Activated B cell treated with CpG ODN at 0.5 μM for 24 hours (primary cell): ENCODE measurements at regions of chr2 and their contacts with region 1.

Region 1: DNA sequence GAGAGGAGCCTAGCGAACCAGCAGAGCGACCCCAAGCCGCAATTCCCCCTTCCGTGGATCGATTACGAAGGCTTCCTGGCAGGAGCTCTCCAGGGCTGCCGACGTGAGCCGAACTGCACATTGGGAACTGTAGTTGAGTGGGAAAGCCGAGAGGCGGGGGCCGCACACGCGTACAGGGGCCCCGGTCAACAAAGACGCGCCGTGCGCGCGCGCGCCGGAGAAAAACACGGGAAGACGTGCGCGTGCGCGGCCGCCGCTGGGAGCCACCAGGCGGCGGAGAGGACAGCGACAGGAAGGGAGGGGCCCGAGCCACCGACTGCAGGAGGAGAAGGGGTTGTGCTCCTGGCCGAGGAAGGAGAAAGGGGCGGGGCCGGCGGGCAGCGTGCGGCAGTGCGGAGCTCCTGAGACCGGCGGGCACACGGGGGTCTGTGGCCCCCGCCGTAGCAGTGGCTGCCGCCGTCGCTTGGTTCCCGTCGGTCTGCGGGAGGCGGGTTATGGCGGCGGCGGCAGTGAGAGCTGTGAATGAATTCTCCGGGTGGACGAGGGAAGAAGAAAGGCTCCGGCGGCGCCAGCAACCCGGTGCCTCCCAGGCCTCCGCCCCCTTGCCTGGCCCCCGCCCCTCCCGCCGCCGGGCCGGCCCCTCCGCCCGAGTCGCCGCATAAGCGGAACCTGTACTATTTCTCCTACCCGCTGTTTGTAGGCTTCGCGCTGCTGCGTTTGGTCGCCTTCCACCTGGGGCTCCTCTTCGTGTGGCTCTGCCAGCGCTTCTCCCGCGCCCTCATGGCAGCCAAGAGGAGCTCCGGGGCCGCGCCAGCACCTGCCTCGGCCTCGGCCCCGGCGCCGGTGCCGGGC is at the start of gene SPAST:
- DNase-seq: peak; percentile 96
- ATAC-seq: peak; percentile 93
- H3K4me3 Mint-ChIP-seq: peak within 1 kb of the TSS; percentile 97
- H3K27ac Mint-ChIP-seq: peak within 1 kb of the TSS; percentile 93
- H3K4me1 Mint-ChIP-seq: peaks cover 30% of the 10 kb centered on the region
- H3K27me3 Mint-ChIP-seq: no peaks in the 10 kb centered on the region
- CTCF ChIP-seq: no peak
- total RNA-seq, gene SPAST: 17.6 and 20.8 TPM in 2 replicates

Region 2: GRCh38 chr2:32010670-32011484 is 52.7 kb before region 1 on chr2 and contains the start of gene MEMO1:
- CTCF ChIA-PET with region 1: no interaction called
- POLR2A ChIA-PET with region 1: interaction called, 36 read pairs
- intact Hi-C with region 1: loop called (anchors 1 kb)
- DNase-seq: peak; percentile 93
- ATAC-seq: peak; percentile 81
- H3K4me3 Mint-ChIP-seq: peak within 1 kb of the TSS; percentile 91
- H3K27ac Mint-ChIP-seq: peak within 1 kb of the TSS; percentile 96
- H3K4me1 Mint-ChIP-seq: peaks cover 39% of the 10 kb centered on the region
- H3K27me3 Mint-ChIP-seq: no peaks in the 10 kb centered on the region
- CTCF ChIP-seq: no peak
- total RNA-seq, gene MEMO1: 68.7 and 71.6 TPM in 2 replicates

Region 3: DNA sequence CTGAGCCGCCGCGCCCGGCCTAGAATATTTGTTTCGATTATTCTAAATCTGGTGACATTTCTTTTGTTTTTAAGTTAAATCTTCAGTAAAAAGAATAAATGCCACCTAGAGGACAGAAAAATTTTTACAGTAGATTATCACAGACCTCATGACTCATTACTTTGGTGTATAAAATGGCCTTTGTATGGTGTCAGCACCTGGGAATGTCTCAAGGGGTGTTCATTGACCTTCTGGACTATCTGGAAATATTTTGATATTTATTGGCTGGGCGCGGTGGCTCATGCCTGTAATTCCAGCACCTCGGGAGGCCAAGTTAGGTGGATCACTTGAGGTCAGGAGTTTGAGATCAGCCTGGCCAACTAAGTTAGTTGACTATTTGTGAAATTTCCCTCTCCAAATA is 71.9 kb after region 1 on chr2:
- CTCF ChIA-PET with region 1: interaction called, 3 read pairs
- POLR2A ChIA-PET with region 1: no interaction called
- intact Hi-C with region 1: loop called (anchors 10 kb)
- DNase-seq: no peak
- ATAC-seq: peak; percentile 31
- H3K4me3 Mint-ChIP-seq: no peak overlapping the region
- H3K27ac Mint-ChIP-seq: no peak overlapping the region
- H3K4me1 Mint-ChIP-seq: peaks cover 2% of the 10 kb centered on the region
- H3K27me3 Mint-ChIP-seq: no peaks in the 10 kb centered on the region
- CTCF ChIP-seq: no peak

Region 4: GRCh38 chr2:32356735-32357644 is 293.5 kb after region 1 on chr2 and contains the start of gene BIRC6:
- CTCF ChIA-PET with region 1: no interaction called
- POLR2A ChIA-PET with region 1: interaction called, 4 read pairs
- intact Hi-C with region 1: loop called (anchors 1 kb)
- DNase-seq: peak; percentile 96
- ATAC-seq: peak; percentile 87
- H3K4me3 Mint-ChIP-seq: peak within 1 kb of the TSS; percentile 93
- H3K27ac Mint-ChIP-seq: peak within 1 kb of the TSS; percentile 90
- H3K4me1 Mint-ChIP-seq: peaks cover 41% of the 10 kb centered on the region
- H3K27me3 Mint-ChIP-seq: no peaks in the 10 kb centered on the region
- CTCF ChIP-seq: no peak
- total RNA-seq, gene BIRC6: 155 and 180 TPM in 2 replicates

Region 5: GRCh38 chr2:33599175-33599942 is 1535.8 kb after region 1 on chr2 and contains the start of gene FAM98A:
- CTCF ChIA-PET with region 1: no interaction called
- POLR2A ChIA-PET with region 1: no interaction called
- intact Hi-C with region 1: loop called (anchors 5 kb)
- DNase-seq: peak; percentile 97
- ATAC-seq: peak; percentile 94
- H3K4me3 Mint-ChIP-seq: peak within 1 kb of the TSS; percentile 99
- H3K27ac Mint-ChIP-seq: peak within 1 kb of the TSS; percentile 96
- H3K4me1 Mint-ChIP-seq: peaks cover 34% of the 10 kb centered on the region
- H3K27me3 Mint-ChIP-seq: no peaks in the 10 kb centered on the region
- CTCF ChIP-seq: no peak
- total RNA-seq, gene FAM98A: 30.2 and 40.5 TPM in 2 replicates